Activated naive CD4-positive, alpha-beta T cell treated with anti-CD3 and anti-CD28 coated beads, Interleukin-2, amount 10 ng/mL, durations not matched to agents 7 days and 5 days (primary cell): ENCODE measurements at regions of chr5 and their contacts with region 1.

Region 1: GRCh38 chr5:143014017-143014651 is 244.0 kb downstream of the ARHGAP26 start:
- DNase-seq: peak; percentile 51
- H3K4me3 Mint-ChIP-seq: no peak overlapping the region
- H3K27ac Mint-ChIP-seq: no peak overlapping the region
- H3K4me1 Mint-ChIP-seq: peaks cover 21% of the 10 kb centered on the region
- H3K27me3 Mint-ChIP-seq: no peaks in the 10 kb centered on the region

Region 2: GRCh38 chr5:142959683-142960657 is 54.2 kb before region 1 on chr5:
- CTCF ChIA-PET with region 1: no interaction called
- DNase-seq: no peak
- H3K4me3 Mint-ChIP-seq: no peak overlapping the region
- H3K27ac Mint-ChIP-seq: no peak overlapping the region
- H3K4me1 Mint-ChIP-seq: peaks cover 13% of the 10 kb centered on the region
- H3K27me3 Mint-ChIP-seq: no peaks in the 10 kb centered on the region

Region 3: GRCh38 chr5:143086908-143087637 is 72.9 kb after region 1 on chr5:
- CTCF ChIA-PET with region 1: no interaction called
- DNase-seq: no peak
- H3K4me3 Mint-ChIP-seq: no peak overlapping the region
- H3K27ac Mint-ChIP-seq: no peak overlapping the region
- H3K4me1 Mint-ChIP-seq: no peaks in the 10 kb centered on the region
- H3K27me3 Mint-ChIP-seq: no peaks in the 10 kb centered on the region

Region 4: GRCh38 chr5:143824851-143825720 is 811.0 kb after region 1 on chr5:
- CTCF ChIA-PET with region 1: interaction called, 10 read pairs
- DNase-seq: peak; percentile 87
- H3K4me3 Mint-ChIP-seq: no peak overlapping the region
- H3K27ac Mint-ChIP-seq: no peak overlapping the region
- H3K4me1 Mint-ChIP-seq: peaks cover 21% of the 10 kb centered on the region
- H3K27me3 Mint-ChIP-seq: no peaks in the 10 kb centered on the region